Astrocyte of the cerebellum (primary cell): ENCODE measurements at regions of chr7 and their contacts with region 1.

Region 1: DNA sequence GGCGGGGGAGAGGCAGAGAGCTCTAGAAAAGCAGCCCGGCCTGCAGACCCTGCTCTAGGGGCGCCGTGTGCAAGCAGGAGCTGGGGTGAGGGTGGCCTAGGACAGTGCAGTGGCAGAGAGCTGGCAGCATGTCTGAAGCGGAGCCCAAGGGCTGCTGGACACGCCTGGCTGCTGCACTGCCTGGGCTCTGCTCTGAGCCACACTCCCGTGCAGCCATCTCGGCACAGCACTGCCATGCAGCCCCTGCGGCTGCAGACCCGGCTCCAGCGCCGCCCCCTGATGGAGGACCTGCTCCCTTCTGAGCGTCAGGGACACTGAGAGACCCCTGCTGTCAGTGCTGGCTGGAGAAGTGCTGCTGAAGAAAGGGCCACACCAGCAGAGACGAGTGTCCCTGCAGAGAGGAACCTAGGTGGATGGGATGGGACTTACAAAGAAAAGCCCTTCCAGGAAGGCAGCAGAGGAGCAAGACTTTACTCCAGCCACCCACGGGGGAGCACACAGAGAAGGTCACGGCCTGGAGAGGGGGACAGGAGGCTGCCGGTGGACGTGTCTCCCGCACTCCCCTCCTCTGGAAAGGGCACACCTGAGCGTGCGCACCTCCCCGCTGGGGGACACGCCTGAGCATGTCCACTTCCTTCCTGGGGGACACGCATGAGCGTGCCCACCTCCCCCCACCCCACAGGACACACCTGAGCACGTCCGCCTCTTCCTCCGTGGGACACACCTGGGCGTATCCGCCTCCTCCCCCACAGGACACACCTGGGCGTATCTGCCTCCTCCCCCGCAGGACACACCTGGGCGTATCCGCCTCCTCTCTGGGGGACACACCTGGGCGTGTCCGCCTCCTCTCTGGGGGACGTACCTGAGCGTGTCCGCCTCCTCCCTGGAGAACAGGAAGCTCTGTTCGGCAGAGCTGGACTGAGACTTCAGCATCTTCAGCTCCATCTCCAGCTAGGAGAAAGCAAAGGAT is 252.9 kb downstream of the MAD1L1 start:
- DNase-seq: no peak
- H3K4me3 ChIP-seq: no peak overlapping the region
- CTCF ChIP-seq: no peak

Region 2: GRCh38 chr7:2023877-2024566 is 44.1 kb after region 1 on chr7:
- in situ Hi-C with region 1: no loop called
- DNase-seq: no peak
- H3K4me3 ChIP-seq: no peak overlapping the region
- CTCF ChIP-seq: no peak

Region 3: DNA sequence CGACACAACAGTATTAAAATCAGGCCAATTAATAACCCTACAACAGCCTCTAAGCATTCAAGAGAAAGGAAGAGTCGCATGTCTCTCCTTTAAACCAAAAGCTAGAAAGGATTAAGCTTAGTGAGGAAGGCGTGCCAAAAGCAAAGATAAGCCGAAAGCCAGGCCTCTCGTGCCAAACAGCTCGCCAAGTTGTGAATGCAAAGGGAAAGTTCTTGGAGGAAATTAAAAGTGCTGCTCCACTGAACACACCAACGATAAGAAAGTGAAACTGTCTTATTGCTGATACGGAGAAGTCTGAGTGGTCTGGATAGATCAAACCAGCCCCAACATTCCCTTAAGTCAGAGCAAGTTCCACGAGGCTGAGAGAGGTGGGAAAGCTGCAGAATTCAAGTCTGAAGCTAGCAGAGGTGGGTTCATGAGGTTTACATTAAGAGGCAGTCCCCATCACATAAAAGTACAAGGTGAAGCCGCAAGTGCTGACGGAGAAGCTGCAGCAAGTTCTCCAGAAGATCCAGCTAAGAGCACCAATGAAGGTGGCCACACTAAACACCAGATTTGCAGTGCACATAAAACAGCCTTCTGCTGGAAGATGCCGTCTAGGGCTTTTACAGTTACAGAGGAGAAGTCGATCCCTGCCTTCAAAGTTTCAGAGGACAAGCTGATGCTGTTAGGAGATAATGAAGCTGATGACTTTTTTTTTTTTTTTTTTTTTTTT is 58.1 kb after region 1 on chr7:
- in situ Hi-C with region 1: loop called (anchors 10 kb)
- DNase-seq: peak; percentile 23
- H3K4me3 ChIP-seq: no peak overlapping the region
- CTCF ChIP-seq: no peak